A549 (cell line): ENCODE measurements at regions of chr7 and their contacts with region 1.

Region 1: GRCh38 chr7:106176414-106177299 is 64.5 kb upstream of the SYPL1 start:
- DNase-seq: peak; percentile 75 to 85
- ATAC-seq: peak; percentile 94
- H3K4me3 ChIP-seq: no peak overlapping the region
- H3K27ac ChIP-seq: peak overlapping the region; percentile 26 to 53; a peak in 5 of 6 replicates
- H3K4me1 ChIP-seq: peaks cover 19% of the 10 kb centered on the region
- CTCF ChIP-seq: peak; percentile 96
- EP300 ChIP-seq: no peak
- POLR2A ChIP-seq: no peak
- RAD21 ChIP-seq: peak; percentile 98 to 99

Region 2: DNA sequence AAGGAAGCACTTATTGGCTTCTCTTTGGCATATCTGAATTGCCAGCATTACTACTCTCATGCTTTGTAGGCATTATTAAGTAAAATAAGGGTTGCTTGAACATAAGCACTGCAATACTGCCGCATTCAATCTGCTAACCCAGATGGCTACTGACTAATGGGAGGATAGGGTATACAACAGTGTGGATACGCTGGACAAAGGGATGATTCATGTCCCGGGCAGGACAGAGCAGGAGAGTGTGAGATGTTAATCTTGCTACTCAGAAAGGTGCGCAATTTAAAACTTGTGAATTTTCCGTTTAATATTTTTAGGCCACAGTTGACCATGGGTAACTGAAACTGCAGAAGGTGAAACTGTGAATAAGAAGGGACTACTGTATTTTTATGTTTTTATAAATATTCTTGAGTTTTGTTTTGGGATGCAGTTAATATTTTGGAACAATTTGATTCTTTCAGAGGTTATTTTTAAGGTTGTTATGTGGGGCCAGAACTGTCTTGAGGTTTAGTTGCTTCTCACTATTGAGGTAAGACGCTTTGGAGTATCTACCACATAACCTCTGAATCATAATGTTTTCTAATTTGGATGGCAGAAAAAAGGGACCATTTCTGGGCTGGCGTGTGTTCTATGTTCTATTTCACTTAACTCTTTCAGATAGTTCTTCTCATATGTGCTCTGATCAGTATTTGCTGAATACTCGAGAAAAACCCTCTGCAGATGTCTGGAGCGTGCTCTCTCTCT is 11.1 kb after region 1 on chr7:
- CTCF ChIA-PET with region 1: interaction called, 11 read pairs
- POLR2A ChIA-PET with region 1: no interaction called
- DNase-seq: no peak
- ATAC-seq: no peak
- H3K4me3 ChIP-seq: no peak overlapping the region
- H3K27ac ChIP-seq: no peak overlapping the region
- H3K4me1 ChIP-seq: no peaks in the 10 kb centered on the region
- CTCF ChIP-seq: no peak
- EP300 ChIP-seq: no peak
- POLR2A ChIP-seq: no peak
- RAD21 ChIP-seq: no peak

Region 3: GRCh38 chr7:106206826-106207541 is 30.3 kb after region 1 on chr7:
- CTCF ChIA-PET with region 1: interaction called, 18 read pairs
- POLR2A ChIA-PET with region 1: no interaction called
- DNase-seq: no peak
- ATAC-seq: no peak
- H3K4me3 ChIP-seq: no peak overlapping the region
- H3K27ac ChIP-seq: peak overlapping the region in 1 of 2 experiments; percentile 18; a peak in 1 of 6 replicates
- H3K4me1 ChIP-seq: no peaks in the 10 kb centered on the region
- CTCF ChIP-seq: no peak
- EP300 ChIP-seq: no peak
- POLR2A ChIP-seq: no peak
- RAD21 ChIP-seq: no peak

Region 4: DNA sequence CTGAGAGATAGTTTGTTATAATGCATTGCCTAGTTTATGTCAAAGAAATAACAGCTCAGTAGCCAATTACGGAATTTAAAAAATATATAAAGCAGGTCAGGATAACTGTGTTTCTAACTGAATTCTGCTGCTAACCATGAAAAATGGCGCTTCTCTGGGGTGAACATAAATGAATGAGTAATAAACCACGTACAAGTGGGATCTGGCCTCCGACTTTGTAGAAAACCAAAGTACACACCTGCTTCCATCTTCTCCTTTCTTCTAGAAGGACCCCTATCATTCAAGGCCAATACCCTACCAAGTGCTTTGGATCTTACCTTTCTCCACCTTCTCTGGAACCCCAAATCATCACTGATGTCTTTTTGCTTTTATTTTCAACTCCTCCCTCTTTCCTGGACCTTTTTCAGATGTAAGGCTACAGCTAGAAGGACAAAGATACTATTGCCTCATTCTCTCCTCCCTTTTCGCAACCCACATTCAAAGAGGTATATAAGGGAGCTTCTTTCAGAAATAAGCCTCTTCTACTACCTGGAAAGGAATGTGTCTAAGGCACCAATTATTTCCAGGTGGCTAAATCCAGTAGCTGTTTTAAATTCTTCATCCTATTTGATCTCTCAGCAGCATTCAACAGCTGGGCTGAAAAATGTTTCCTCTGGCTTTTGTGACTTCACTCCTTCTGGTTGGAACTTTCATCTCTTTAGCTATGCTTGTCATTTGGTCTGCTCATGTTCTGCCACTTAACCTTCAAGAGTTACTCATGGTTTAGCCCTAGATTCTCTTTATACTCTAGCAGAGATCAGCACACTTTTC is 70.5 kb after region 1 on chr7:
- CTCF ChIA-PET with region 1: interaction called, 10 read pairs
- POLR2A ChIA-PET with region 1: no interaction called
- DNase-seq: no peak
- ATAC-seq: peak; percentile 43 to 55; a peak in 5 of 6 replicates
- H3K4me3 ChIP-seq: no peak overlapping the region
- H3K27ac ChIP-seq: no peak overlapping the region
- H3K4me1 ChIP-seq: no peaks in the 10 kb centered on the region
- CTCF ChIP-seq: no peak
- EP300 ChIP-seq: no peak
- POLR2A ChIP-seq: no peak
- RAD21 ChIP-seq: no peak

Region 5: GRCh38 chr7:106456339-106456738 is 279.7 kb after region 1 on chr7:
- CTCF ChIA-PET with region 1: interaction called, 289 read pairs
- POLR2A ChIA-PET with region 1: no interaction called
- DNase-seq: no peak
- ATAC-seq: no peak
- H3K4me3 ChIP-seq: no peak overlapping the region
- H3K27ac ChIP-seq: peak overlapping the region; percentile 28 to 41; a peak in 3 of 6 replicates
- H3K4me1 ChIP-seq: peaks cover 9% of the 10 kb centered on the region; the same call in 2 of the 3 replicates
- CTCF ChIP-seq: no peak
- EP300 ChIP-seq: no peak
- POLR2A ChIP-seq: no peak
- RAD21 ChIP-seq: no peak

Region 6: DNA sequence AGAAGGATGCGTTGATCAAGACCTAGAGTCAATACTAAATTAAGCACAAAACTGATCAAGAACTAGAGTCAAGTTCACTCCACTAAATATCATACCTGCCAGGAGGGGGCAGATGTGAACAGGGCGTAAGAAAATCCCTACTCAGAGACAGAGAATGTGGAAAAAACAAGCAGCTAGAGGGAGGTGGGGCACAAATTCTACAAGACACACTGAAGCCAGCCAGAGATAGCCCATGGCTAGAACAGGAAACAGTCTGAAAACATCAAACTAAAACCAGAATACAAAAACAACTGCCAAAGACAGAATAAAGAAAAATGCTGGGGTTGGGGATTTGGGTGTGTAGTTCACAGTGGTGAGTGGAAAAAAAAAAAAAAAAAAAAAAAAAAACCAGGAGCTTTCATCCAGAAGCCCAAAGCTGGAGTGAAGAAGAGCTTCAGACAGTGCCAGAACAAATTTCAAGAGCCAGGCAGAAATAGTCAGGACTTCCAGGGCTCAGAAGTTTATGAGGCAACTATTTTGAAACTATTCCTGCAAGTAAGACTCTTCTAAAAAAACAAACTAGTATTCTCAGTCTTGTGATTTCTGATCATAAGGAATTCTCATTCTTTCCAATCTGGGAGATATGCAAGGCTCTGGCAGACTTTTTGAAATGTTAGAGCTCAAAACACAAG is 366.0 kb after region 1 on chr7:
- CTCF ChIA-PET with region 1: interaction called, 13 read pairs
- POLR2A ChIA-PET with region 1: no interaction called
- DNase-seq: peak; percentile 25 to 75
- ATAC-seq: peak; percentile 89 to 97
- H3K4me3 ChIP-seq: no peak overlapping the region
- H3K27ac ChIP-seq: peak overlapping the region in 1 of 2 experiments; percentile 20; a peak in 2 of 6 replicates
- H3K4me1 ChIP-seq: peaks cover 6% of the 10 kb centered on the region; the same call in 1 of the 3 replicates
- CTCF ChIP-seq: peak; percentile 66
- EP300 ChIP-seq: no peak
- POLR2A ChIP-seq: no peak
- RAD21 ChIP-seq: peak; percentile 68 to 70

Region 7: GRCh38 chr7:106693677-106694353 is 517.2 kb after region 1 on chr7:
- CTCF ChIA-PET with region 1: no interaction called
- POLR2A ChIA-PET with region 1: no interaction called
- DNase-seq: no peak
- ATAC-seq: no peak
- H3K4me3 ChIP-seq: no peak overlapping the region
- H3K27ac ChIP-seq: no peak overlapping the region
- H3K4me1 ChIP-seq: no peaks in the 10 kb centered on the region
- CTCF ChIP-seq: no peak
- EP300 ChIP-seq: no peak
- POLR2A ChIP-seq: no peak
- RAD21 ChIP-seq: no peak

Region 8: GRCh38 chr7:106736508-106737201 is 560.0 kb after region 1 on chr7:
- CTCF ChIA-PET with region 1: interaction called, 38 read pairs
- POLR2A ChIA-PET with region 1: interaction called, 6 read pairs
- DNase-seq: peak; percentile 32 to 61
- ATAC-seq: peak; percentile 91 to 96
- H3K4me3 ChIP-seq: no peak overlapping the region
- H3K27ac ChIP-seq: peak overlapping the region in 1 of 2 experiments; percentile 66; a peak in 3 of 6 replicates
- H3K4me1 ChIP-seq: no peaks in the 10 kb centered on the region
- CTCF ChIP-seq: peak; percentile 41
- EP300 ChIP-seq: no peak
- POLR2A ChIP-seq: no peak
- RAD21 ChIP-seq: peak; percentile 52 to 56